A673 (cell line): ENCODE measurements at regions of chr6 and their contacts with region 1.

Region 1: DNA sequence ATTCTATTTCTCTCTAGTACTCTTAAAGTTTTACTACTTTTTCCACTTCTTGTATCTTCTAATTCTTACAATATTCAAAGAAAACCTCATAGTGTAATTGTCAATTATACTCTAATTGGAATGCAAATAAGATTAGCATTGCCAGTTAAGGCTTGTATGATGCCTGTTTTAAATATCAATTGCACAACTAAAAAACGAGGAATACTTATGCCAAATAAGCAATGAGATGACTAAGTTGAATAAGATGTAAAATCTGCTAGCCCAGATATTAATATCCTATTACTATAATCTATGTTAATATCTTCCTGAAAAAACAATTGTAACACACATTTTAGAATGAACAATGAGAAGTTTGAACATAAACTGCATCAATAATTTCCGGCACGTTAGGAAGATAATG is 13.3 kb upstream of the AKAP7 start:
- DNase-seq: peak; percentile 71
- H3K4me3 ChIP-seq: peak overlapping the region; percentile 4
- H3K27ac ChIP-seq: peak overlapping the region; percentile 95
- H3K4me1 ChIP-seq: peaks cover 65% of the 10 kb centered on the region
- H3K27me3 ChIP-seq: no peaks in the 10 kb centered on the region
- CTCF ChIP-seq: no peak

Region 2: GRCh38 chr6:130183271-130184222 is 938.5 kb before region 1 on chr6:
- CTCF ChIA-PET with region 1: no interaction called
- POLR2A ChIA-PET with region 1: no interaction called
- intact Hi-C with region 1: no loop called
- DNase-seq: no peak
- H3K4me3 ChIP-seq: no peak overlapping the region
- H3K27ac ChIP-seq: no peak overlapping the region
- H3K4me1 ChIP-seq: no peaks in the 10 kb centered on the region
- H3K27me3 ChIP-seq: no peaks in the 10 kb centered on the region
- CTCF ChIP-seq: no peak

Region 3: DNA sequence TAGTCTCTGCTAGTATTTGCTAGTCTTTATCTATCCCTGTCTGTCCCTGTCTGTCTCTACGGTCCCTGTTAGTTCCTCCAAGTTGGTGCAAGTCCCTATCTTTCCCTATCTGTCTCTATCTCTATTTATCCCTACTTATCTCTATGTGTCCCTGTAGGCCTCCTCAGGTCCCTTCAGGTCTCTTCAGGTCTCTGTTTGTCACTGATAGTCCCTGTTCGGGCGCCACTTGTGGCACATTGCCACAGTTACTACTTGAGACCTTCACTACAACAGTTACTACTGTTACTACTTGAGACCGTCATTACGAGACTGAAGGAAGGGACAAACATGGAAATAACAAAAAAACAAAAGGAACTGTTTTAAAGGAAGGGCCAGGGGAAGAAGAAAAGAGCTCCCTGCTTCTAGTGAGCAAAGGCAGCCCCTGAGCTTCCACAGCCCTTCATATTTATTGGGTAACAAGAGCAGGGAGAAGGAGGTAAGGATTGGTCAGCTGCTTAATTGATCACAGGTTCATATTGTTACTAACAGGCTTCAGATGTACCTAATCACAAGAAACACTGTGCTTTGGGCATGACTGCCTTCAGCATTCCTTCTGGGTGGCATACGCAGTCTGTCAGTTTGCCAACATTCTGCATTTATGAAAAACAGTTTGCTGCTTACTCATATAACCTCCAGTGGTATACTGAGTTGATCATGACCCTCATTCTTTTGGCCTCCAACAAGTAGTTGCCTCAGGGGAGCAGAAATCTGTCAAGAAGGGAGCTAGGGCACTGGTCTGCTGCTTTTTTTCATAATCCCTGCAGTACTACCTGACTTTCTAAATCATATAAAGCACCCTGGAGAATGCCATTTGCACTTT is 67.4 kb before region 1 on chr6:
- CTCF ChIA-PET with region 1: no interaction called
- POLR2A ChIA-PET with region 1: no interaction called
- intact Hi-C with region 1: no loop called
- DNase-seq: no peak
- H3K4me3 ChIP-seq: no peak overlapping the region
- H3K27ac ChIP-seq: no peak overlapping the region
- H3K4me1 ChIP-seq: peaks cover 17% of the 10 kb centered on the region
- H3K27me3 ChIP-seq: no peaks in the 10 kb centered on the region
- CTCF ChIP-seq: no peak

Region 4: DNA sequence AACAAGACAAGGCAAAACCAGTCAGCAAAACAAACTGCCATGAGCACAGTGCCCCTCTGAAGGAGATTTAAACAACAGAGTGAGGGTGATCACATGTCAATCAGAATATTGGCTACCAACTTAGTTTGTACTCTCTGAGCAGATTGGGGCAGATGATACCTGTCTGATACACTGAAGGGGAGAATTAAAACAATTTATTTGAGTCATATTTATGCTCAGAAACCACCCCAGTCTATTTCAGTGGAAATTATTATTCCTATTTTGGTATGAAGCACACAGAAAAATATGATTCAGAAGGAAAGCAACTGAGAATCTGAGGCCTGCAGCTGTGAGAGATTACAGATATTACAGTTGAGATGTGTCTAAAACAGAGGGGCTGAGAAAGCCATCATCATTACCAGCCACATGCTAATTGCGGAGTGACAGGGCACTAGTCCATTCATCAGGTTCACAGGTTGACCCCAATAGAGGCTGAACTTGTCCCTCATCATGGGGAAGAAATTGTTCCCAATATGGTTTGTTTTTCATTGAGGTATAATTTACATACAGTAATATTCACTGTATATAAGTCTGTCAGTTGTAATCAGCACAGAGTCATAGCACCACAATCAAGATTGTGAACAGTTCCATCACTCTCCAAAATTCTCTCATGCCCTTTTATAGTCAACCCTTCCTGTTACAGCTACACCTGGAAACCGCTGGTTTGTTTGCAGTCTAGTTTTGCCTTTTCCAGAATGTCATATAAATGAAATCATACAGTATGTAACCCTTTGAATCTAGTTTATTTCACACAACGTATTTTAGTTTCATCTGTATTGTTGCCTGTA is 147.8 kb after region 1 on chr6:
- CTCF ChIA-PET with region 1: no interaction called
- POLR2A ChIA-PET with region 1: no interaction called
- intact Hi-C with region 1: no loop called
- DNase-seq: no peak
- H3K4me3 ChIP-seq: no peak overlapping the region
- H3K27ac ChIP-seq: no peak overlapping the region
- H3K4me1 ChIP-seq: peaks cover 20% of the 10 kb centered on the region
- H3K27me3 ChIP-seq: no peaks in the 10 kb centered on the region
- CTCF ChIP-seq: no peak

Region 5: DNA sequence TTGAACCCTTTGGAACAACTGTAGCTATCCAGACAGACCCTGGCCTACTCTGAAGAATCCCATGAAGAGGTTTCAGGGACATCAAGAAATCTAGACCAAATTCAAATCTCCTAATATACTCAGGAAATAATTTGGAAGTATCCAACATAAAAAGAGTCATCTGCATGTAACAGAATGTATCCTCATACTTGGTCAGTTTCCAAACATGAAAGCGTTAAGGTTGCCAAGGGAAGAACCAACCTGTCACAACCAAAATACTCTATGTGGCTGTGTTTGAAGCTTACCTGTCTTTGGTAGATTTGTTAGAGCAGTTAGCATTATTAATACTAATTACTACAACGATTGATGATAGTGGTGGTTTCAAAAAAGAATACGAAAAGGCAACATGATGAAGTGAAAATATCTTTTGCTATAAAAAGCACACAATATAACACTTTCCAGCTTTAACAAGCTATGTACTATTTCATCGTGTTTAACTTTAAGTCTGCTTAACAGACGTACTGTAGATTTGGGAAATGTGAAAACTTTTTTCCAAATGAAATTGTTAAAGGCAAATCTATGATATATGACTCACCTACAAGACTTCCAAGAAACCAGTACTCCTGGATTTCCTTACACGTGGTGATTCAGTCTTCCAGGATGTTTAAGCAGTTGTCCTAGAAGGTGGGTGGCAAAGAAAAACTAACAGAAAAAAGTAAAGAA is 639.2 kb after region 1 on chr6:
- CTCF ChIA-PET with region 1: no interaction called
- POLR2A ChIA-PET with region 1: no interaction called
- intact Hi-C with region 1: loop called (anchors 2 kb)
- DNase-seq: peak; percentile 39
- H3K4me3 ChIP-seq: no peak overlapping the region
- H3K27ac ChIP-seq: peak overlapping the region; percentile 84
- H3K4me1 ChIP-seq: peaks cover 65% of the 10 kb centered on the region
- H3K27me3 ChIP-seq: no peaks in the 10 kb centered on the region
- CTCF ChIP-seq: no peak